Activated B cell treated with CpG ODN at 0.5 μM for 24 hours (primary cell): ENCODE measurements at regions of chr9 and their contacts with region 1.

Region 1: GRCh38 chr9:89000973-89001916 is 10.0 kb downstream of the S1PR3 start:
- DNase-seq: peak; percentile 42
- ATAC-seq: peak; percentile 45
- H3K4me3 Mint-ChIP-seq: no peak overlapping the region
- H3K27ac Mint-ChIP-seq: no peak overlapping the region
- H3K4me1 Mint-ChIP-seq: peaks cover 5% of the 10 kb centered on the region
- H3K27me3 Mint-ChIP-seq: peaks cover 18% of the 10 kb centered on the region
- CTCF ChIP-seq: peak; percentile 41

Region 2: DNA sequence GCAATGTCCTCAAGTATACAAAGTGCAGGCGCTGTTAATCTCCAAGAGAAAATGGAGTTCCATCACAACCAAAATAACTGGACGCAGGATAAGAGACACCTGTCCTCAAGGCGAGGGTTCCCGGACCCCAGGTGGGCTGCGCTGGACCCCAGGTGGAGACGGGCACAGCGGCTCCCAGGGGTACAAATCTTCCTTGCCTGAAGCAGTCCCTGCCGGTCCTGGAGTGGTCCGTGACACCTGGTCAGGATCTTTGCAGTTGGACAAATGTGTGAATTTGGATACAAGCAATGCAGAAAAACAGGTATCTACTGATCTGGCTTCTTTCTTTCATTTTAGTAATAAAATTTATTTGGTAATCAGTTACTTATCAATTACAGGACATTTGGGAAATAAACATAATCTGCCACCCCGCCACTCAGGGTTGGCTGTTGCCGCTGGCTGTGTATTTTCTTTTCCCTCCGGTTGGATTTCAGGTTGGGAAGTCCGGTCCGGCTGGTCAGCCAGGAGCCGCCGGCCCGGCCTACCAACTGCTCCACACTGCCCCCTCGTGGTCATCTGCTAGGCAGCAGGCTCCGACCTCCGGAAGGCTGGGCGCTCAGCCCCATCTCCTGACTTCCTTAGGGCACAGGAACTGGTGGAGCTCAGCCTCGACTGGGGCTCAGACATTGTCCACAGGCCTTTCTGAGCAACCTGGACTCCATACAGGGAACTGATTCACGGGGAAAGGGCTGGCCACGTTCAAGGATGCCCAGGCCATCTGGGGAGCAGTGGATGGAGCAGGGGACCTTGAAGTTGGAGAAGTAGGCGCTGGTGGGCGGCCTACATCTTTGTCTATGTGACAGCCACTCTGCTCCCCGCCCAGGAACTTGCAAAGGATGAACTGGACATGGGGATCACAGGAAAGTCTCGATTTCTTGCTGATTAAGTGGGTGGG is 422.9 kb before region 1 on chr9:
- CTCF ChIA-PET with region 1: interaction called, 4 read pairs
- POLR2A ChIA-PET with region 1: no interaction called
- intact Hi-C with region 1: loop called (anchors 5 kb)
- DNase-seq: peak; percentile 57
- ATAC-seq: peak; percentile 54
- H3K4me3 Mint-ChIP-seq: peak overlapping the region; percentile 50
- H3K27ac Mint-ChIP-seq: no peak overlapping the region
- H3K4me1 Mint-ChIP-seq: peaks cover 5% of the 10 kb centered on the region
- H3K27me3 Mint-ChIP-seq: peaks cover 19% of the 10 kb centered on the region
- CTCF ChIP-seq: peak; percentile 93

Region 3: GRCh38 chr9:88593537-88594185 is 407.6 kb before region 1 on chr9:
- CTCF ChIA-PET with region 1: interaction called, 14 read pairs
- POLR2A ChIA-PET with region 1: no interaction called
- intact Hi-C with region 1: no loop called
- DNase-seq: no peak
- ATAC-seq: peak; percentile 50
- H3K4me3 Mint-ChIP-seq: no peak overlapping the region
- H3K27ac Mint-ChIP-seq: no peak overlapping the region
- H3K4me1 Mint-ChIP-seq: peaks cover 16% of the 10 kb centered on the region
- H3K27me3 Mint-ChIP-seq: peaks cover 6% of the 10 kb centered on the region
- CTCF ChIP-seq: no peak

Region 4: DNA sequence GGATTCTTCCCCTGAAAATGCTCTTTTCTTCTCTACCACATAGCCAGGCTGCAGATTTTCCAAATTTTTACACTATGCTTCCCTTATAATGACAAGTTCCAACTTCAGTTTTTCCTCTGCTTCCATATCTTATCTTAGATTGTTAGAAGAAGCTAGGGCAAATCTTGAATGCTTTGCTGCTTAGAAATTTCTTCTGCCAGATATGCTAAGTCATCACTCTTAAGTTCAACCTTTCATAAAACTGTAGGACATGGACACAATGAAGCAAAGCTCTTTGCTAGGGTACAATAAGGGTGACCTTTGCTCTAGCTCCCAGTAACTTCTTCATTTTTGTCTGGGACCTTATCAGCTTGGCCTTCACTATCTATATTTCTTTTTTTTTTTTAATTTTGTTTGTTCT is 377.5 kb before region 1 on chr9:
- CTCF ChIA-PET with region 1: no interaction called
- POLR2A ChIA-PET with region 1: no interaction called
- intact Hi-C with region 1: no loop called
- DNase-seq: no peak
- ATAC-seq: no peak
- H3K4me3 Mint-ChIP-seq: no peak overlapping the region
- H3K27ac Mint-ChIP-seq: no peak overlapping the region
- H3K4me1 Mint-ChIP-seq: no peaks in the 10 kb centered on the region
- H3K27me3 Mint-ChIP-seq: peaks cover 3% of the 10 kb centered on the region
- CTCF ChIP-seq: no peak

Region 5: GRCh38 chr9:88722753-88723152 is 278.5 kb before region 1 on chr9:
- CTCF ChIA-PET with region 1: no interaction called
- POLR2A ChIA-PET with region 1: no interaction called
- intact Hi-C with region 1: loop called (anchors 1 kb)
- DNase-seq: no peak
- ATAC-seq: no peak
- H3K4me3 Mint-ChIP-seq: no peak overlapping the region
- H3K27ac Mint-ChIP-seq: no peak overlapping the region
- H3K4me1 Mint-ChIP-seq: no peaks in the 10 kb centered on the region
- H3K27me3 Mint-ChIP-seq: peaks cover 8% of the 10 kb centered on the region
- CTCF ChIP-seq: no peak

Region 6: GRCh38 chr9:88773627-88774244 is 227.5 kb before region 1 on chr9:
- CTCF ChIA-PET with region 1: no interaction called
- POLR2A ChIA-PET with region 1: no interaction called
- intact Hi-C with region 1: no loop called
- DNase-seq: no peak
- ATAC-seq: no peak
- H3K4me3 Mint-ChIP-seq: no peak overlapping the region
- H3K27ac Mint-ChIP-seq: no peak overlapping the region
- H3K4me1 Mint-ChIP-seq: peaks cover 19% of the 10 kb centered on the region
- H3K27me3 Mint-ChIP-seq: peaks cover 4% of the 10 kb centered on the region
- CTCF ChIP-seq: no peak

Region 7: DNA sequence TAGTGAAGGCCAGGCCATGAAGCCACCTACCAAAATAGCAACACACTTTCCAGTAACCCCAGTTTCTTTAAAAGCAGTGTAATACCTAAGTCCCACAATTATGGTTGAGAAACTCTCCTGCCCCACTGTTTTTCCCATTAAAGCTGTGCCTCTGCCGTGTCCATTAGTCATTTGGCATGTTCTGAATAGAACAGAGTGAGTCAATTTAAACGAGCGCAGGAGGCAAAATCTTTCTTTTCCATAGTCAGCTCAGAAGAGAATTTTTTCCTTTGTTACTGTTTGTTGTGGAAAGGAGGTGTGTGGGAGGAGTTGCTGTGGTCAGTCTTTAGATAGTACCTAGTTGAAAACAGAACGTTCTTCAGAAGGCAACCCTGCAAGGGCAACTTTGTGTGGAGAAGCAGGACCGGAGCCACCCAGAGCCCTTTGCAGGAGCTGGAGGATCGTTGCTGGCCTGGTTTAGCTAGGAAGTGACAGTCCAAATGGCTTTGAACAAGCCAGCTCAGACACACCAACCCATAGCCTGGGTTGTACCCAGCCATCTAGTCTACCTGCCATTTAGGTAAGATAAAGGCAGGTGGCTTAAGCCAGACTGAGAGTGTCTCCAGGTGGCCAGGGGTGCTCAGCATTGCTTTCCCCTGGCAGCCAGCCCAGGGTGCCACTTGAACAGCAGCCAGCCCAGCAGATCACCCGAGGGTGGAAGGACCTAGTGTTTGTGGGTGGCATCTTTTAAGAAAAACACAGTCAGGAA is 633.9 kb after region 1 on chr9:
- CTCF ChIA-PET with region 1: no interaction called
- POLR2A ChIA-PET with region 1: no interaction called
- intact Hi-C with region 1: no loop called
- DNase-seq: no peak
- ATAC-seq: no peak
- H3K4me3 Mint-ChIP-seq: no peak overlapping the region
- H3K27ac Mint-ChIP-seq: no peak overlapping the region
- H3K4me1 Mint-ChIP-seq: no peaks in the 10 kb centered on the region
- H3K27me3 Mint-ChIP-seq: no peaks in the 10 kb centered on the region
- CTCF ChIP-seq: no peak